Ovary (tissue), 10 donors: ENCODE measurements at regions of chr19 and their contacts with region 1.

Region 1: GRCh38 chr19:47790398-47790814 is 11.9 kb downstream of the SELENOW start:
- DNase-seq: peak; percentile 75 to 89 (median 84)
- H3K4me3 ChIP-seq: no peak overlapping the region
- H3K27ac ChIP-seq: no peak overlapping the region
- H3K4me1 ChIP-seq: no peaks in the 10 kb centered on the region
- H3K27me3 ChIP-seq: no peaks in the 10 kb centered on the region
- CTCF ChIP-seq: peak; percentile 42 to 62 (median 47)
- EP300 ChIP-seq: no peak
- POLR2A ChIP-seq: no peak

Region 2: GRCh38 chr19:47713046-47714021 is 77.1 kb before region 1 on chr19 and contains the start of gene EHD2:
- intact Hi-C with region 1: loop called in 2 of 4 experiments (anchors 5 to 10 kb)
- DNase-seq: peak; percentile 85 to 91 (median 90)
- H3K4me3 ChIP-seq: peak within 1 kb of the TSS; percentile 92
- H3K27ac ChIP-seq: peak within 1 kb of the TSS; percentile 73 to 88
- H3K4me1 ChIP-seq: peaks cover 25% of the 10 kb centered on the region
- H3K27me3 ChIP-seq: no peaks in the 10 kb centered on the region
- CTCF ChIP-seq: peak; percentile 98 to 99 (median 98)
- EP300 ChIP-seq: no peak
- POLR2A ChIP-seq: peak; percentile 78
- total RNA-seq, gene EHD2: 28.0 to 162 (median 129) TPM

Region 3: GRCh38 chr19:47765523-47766358 is 24.7 kb before region 1 on chr19:
- intact Hi-C with region 1: loop called in 1 of 4 experiments (anchors 2 kb)
- DNase-seq: peak; percentile 44 to 78 (median 63)
- H3K4me3 ChIP-seq: no peak overlapping the region
- H3K27ac ChIP-seq: no peak overlapping the region
- H3K4me1 ChIP-seq: peaks cover 3% of the 10 kb centered on the region
- H3K27me3 ChIP-seq: no peaks in the 10 kb centered on the region
- CTCF ChIP-seq: peak; percentile 44 to 52 (median 50)
- EP300 ChIP-seq: no peak
- POLR2A ChIP-seq: no peak

Region 4: GRCh38 chr19:49282184-49282583 is 1491.8 kb after region 1 on chr19:
- intact Hi-C with region 1: no loop called
- DNase-seq: no peak
- H3K4me3 ChIP-seq: no peak overlapping the region
- H3K27ac ChIP-seq: no peak overlapping the region
- H3K4me1 ChIP-seq: no peaks in the 10 kb centered on the region
- H3K27me3 ChIP-seq: no peaks in the 10 kb centered on the region
- CTCF ChIP-seq: no peak
- EP300 ChIP-seq: no peak
- POLR2A ChIP-seq: no peak